Naive thymus-derived CD8-positive, alpha-beta T cell (primary cell): ENCODE measurements at regions of chr5 and their contacts with region 1.

Region 1: DNA sequence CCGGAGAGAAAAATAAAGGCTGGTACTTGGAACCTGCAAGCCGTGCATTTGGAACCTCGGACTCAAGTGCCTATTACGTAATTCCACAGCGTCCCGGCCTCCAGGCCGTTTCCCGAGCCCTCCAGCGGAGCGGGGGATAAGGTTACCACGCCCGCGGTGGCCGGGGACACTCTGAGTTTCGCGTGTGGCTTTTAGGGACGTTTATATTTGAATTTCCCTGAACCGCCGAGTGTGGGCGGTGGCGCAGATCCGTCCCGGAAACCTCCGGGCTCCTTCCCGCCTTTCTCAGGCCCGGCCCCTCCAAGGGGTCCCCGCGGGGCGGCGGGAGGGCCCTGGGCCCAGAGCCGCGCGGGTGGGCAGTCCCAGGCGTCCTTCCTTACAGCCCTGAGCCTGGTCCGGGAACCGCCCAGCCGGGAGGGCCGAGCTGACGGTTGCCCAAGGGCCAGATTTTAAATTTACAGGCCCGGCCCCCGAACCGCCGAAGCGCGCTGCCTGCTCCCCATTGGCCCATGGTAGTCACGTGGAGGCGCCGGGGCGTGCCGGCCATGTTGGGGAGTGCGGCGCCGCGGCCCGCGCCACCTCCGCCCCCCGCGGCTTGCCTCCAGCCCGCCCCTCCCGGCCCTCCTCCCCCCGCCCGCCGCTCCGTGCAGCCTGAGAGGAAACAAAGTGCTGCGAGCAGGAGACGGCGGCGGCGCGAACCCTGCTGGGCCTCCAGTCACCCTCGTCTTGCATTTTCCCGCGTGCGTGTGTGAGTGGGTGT is at the start of gene LMNB1:
- DNase-seq: peak; percentile 87 to 98 (median 93)
- ATAC-seq: peak; percentile 75 to 78
- H3K4me3 Mint-ChIP-seq: peak within 1 kb of the TSS; percentile 90 to 100 (median 93)
- H3K27ac Mint-ChIP-seq: peak within 1 kb of the TSS; percentile 74 to 97 (median 94)
- H3K4me1 Mint-ChIP-seq: peaks cover 10 to 31% (median 28%) of the 10 kb centered on the region in 4 donors
- H3K27me3 Mint-ChIP-seq: no peaks in the 10 kb centered on the region
- polyA plus RNA-seq, gene LMNB1: 6.1 to 8.2 (median 7.9) TPM

Region 2: GRCh38 chr5:126600631-126601511 is 175.8 kb before region 1 on chr5 and contains the start of gene PHAX:
- POLR2A ChIA-PET with region 1: interaction called, 18 read pairs
- DNase-seq: peak; percentile 55 to 75 (median 68)
- ATAC-seq: peak; percentile 91 to 94
- H3K4me3 Mint-ChIP-seq: peak within 1 kb of the TSS; percentile 85 to 100 (median 96)
- H3K27ac Mint-ChIP-seq: peak within 1 kb of the TSS; percentile 82 to 98 (median 94)
- H3K4me1 Mint-ChIP-seq: peaks cover 10 to 41% (median 32%) of the 10 kb centered on the region in 4 donors
- H3K27me3 Mint-ChIP-seq: no peaks in the 10 kb centered on the region
- polyA plus RNA-seq, gene PHAX: 75.3 to 92.8 (median 83.9) TPM

Region 3: DNA sequence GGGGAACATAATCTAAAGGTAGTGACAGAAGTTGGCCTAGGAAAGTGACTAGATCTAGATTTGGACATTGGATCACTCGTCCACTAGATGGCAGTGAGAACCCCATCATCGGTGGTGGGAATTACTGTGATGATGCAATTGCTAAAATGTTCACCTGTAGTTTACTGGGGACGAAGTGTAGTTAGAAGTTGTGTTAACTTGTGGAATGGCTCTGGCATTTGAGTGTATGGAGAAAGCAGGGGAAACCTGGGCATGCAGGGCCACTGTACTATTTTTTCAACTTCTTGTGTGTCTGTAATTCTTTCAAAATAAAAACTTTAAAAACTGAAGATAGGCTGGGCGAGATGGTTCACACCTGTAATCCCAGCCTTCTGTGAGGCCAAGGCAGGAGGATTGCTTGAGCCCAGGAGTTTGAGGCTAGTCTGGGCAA is 100.5 kb before region 1 on chr5:
- POLR2A ChIA-PET with region 1: interaction called, 11 read pairs
- DNase-seq: peak; percentile 18 to 82 (median 64)
- ATAC-seq: peak; percentile 79 to 94
- H3K4me3 Mint-ChIP-seq: no peak overlapping the region
- H3K27ac Mint-ChIP-seq: no peak overlapping the region
- H3K4me1 Mint-ChIP-seq: peaks cover 1 to 6% (median 3%) of the 10 kb centered on the region in 4 donors
- H3K27me3 Mint-ChIP-seq: no peaks in the 10 kb centered on the region

Region 4: GRCh38 chr5:126846344-126846743 is 69.7 kb after region 1 on chr5:
- POLR2A ChIA-PET with region 1: interaction called, 72 read pairs
- DNase-seq: no peak
- ATAC-seq: no peak
- H3K4me3 Mint-ChIP-seq: peak overlapping the region in 3 of 10 donors; percentile 24 to 69 (median 54)
- H3K27ac Mint-ChIP-seq: peak overlapping the region; percentile 57 to 99 (median 94)
- H3K4me1 Mint-ChIP-seq: peaks cover 10 to 54% (median 32%) of the 10 kb centered on the region in 4 donors
- H3K27me3 Mint-ChIP-seq: no peaks in the 10 kb centered on the region

Region 5: DNA sequence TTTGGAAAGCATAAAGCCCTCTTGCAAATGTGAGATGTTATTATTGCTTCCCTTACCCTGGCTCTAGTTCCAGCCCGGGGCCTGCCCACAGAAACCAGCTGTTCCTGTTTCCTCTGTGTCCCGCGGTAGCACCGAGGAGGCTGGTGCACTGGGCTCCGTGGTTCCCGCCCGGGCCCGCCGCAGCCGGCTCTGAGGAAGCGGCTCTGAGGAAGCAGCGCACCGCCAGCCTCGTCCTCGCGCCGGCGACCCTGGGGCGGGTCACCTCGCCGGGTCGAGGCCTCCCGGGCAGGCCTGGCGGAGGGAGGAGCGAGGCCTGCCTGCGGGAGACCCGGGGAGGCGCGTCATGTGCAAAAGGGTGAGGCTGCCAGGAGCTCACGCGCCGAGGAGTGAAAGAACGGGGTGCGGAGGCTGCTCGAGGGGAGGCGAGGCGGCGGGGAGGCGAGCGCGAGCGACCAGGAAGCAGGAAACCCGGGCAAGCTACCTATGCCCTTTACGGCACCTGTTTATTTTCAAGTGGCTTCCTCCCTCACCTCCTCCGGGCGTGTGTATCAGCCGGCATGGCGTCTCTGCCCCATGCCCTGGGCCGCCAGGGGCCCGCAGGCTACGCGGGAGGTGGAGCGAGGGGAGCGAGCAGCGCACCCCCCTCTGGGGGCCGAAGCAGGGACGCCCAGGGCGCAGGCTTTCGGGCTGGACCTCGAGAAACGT is 452.7 kb after region 1 on chr5:
- POLR2A ChIA-PET with region 1: interaction called, 12 read pairs
- DNase-seq: peak; percentile 21 to 70 (median 48)
- ATAC-seq: peak; percentile 84 to 87
- H3K4me3 Mint-ChIP-seq: peak overlapping the region; percentile 73 to 90 (median 78)
- H3K27ac Mint-ChIP-seq: peak overlapping the region; percentile 47 to 96 (median 90)
- H3K4me1 Mint-ChIP-seq: peaks cover 9 to 22% (median 19%) of the 10 kb centered on the region in 4 donors
- H3K27me3 Mint-ChIP-seq: no peaks in the 10 kb centered on the region